AG04450 (cell line): ENCODE measurements at regions of chr9 and their contacts with region 1.

Region 1: DNA sequence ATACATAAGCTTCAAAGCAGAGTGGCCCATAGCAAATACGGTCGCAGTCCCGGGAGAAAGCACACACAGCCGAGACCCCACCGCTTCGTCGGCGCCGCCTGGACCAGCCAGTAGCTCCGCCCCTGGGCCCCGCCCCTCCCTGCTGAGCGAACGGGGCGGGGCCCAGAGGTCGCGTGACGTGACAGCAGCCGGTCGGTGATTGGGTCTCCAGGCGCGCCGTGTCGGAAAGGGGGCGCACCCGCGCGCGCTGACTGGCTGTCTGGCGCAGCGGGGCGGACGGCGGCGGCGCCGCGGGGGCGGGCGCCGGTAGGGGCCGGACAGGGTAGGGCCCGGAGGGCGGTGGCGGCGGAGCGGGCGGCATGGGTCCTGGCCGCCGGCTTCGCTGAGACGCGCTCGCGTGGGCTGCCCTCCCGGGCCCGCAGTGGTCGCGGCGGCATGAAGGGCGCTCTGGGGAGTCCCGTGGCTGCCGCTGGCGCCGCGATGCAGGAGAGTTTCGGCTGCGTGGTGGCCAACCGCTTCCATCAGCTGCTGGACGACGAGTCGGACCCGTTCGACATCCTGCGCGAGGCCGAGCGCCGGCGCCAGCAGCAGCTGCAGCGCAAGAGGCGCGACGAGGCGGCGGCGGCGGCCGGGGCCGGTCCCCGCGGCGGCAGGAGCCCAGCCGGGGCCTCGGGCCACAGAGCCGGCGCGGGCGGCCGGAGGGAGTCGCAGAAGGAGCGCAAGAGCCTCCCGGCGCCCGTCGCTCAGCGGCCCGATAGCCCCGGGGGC is at the start of gene HABP4:
- DNase-seq: peak; percentile 73
- H3K4me3 ChIP-seq: peak within 1 kb of the TSS; percentile 81
- H3K27ac ChIP-seq: no peak within 1 kb of the TSS
- H3K27me3 ChIP-seq: no peaks in the 10 kb centered on the region
- CTCF ChIP-seq: no peak
- polyA plus RNA-seq, gene HABP4: 8.9 and 10.8 TPM in 2 replicates

Region 2: GRCh38 chr9:95096807-95097206 is 1353.2 kb before region 1 on chr9:
- CTCF ChIA-PET with region 1: no interaction called
- POLR2A ChIA-PET with region 1: interaction called, 12 read pairs
- DNase-seq: no peak
- H3K4me3 ChIP-seq: no peak overlapping the region
- H3K27ac ChIP-seq: no peak overlapping the region
- H3K27me3 ChIP-seq: no peaks in the 10 kb centered on the region
- CTCF ChIP-seq: 0 out of 2 replicates have a peak, but pooled peaks have one; percentile 4

Region 3: GRCh38 chr9:95875305-95876137 is 574.5 kb before region 1 on chr9 and contains the start of gene ERCC6L2:
- CTCF ChIA-PET with region 1: no interaction called
- POLR2A ChIA-PET with region 1: no interaction called
- DNase-seq: peak; percentile 98
- H3K4me3 ChIP-seq: no peak within 1 kb of the TSS
- H3K27ac ChIP-seq: peak within 1 kb of the TSS; percentile 100
- H3K27me3 ChIP-seq: no peaks in the 10 kb centered on the region
- CTCF ChIP-seq: 0 out of 2 replicates have a peak, but pooled peaks have one; percentile 16
- polyA plus RNA-seq, gene ERCC6L2: 30.1 and 39.1 TPM in 2 replicates

Region 4: GRCh38 chr9:96478829-96479371 is 28.9 kb after region 1 on chr9:
- CTCF ChIA-PET with region 1: interaction called, 15 read pairs
- POLR2A ChIA-PET with region 1: interaction called, 3 read pairs
- DNase-seq: no peak
- H3K4me3 ChIP-seq: no peak overlapping the region
- H3K27ac ChIP-seq: no peak overlapping the region
- H3K27me3 ChIP-seq: no peaks in the 10 kb centered on the region
- CTCF ChIP-seq: no peak

Region 5: DNA sequence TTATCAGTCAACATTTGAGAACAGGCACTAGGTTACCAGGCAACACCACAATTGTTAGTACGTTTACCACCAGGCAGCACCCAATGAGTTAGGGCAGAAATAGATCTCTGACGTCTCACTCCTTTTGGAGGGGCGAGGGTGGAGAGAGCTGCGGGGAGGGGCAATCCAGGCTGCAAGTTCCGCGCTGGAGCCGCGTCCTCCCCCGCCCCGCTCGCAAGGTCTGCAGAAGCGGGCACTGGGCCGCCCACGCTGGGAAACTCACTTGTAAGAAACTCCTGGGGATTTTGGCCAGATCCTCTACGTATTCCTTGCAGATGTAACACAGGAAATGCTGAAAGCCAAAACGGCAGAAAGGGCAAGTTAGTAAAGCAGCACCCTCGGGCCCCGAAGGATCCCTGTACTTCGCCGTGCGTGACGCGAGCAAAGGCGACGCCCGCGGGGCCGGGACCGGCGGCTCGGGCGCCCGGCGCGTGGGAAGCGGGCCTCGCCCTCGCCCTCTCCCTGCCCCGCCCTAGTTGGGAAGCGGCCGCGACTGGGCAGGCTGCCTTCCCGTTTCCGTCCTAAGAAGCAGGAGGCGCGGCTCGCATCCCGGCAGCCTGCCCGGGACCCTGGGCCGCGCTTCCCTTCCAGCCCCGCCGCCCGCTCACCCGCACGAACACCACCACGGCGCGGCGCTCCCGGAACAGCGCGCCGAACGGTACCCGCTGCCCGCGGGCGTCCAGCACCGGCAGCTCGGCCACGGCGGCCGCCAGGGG is 204.6 kb after region 1 on chr9:
- CTCF ChIA-PET with region 1: interaction called, 8 read pairs
- POLR2A ChIA-PET with region 1: interaction called, 11 read pairs
- DNase-seq: peak; percentile 42
- H3K4me3 ChIP-seq: peak overlapping the region; percentile 72
- H3K27ac ChIP-seq: peak overlapping the region; percentile 47
- H3K27me3 ChIP-seq: peaks cover 2% of the 10 kb centered on the region
- CTCF ChIP-seq: no peak